Activated CD4-positive, alpha-beta memory T cell treated with anti-CD3 and anti-CD28 coated beads for 36 hours (primary cell): ENCODE measurements at regions of chr15 and their contacts with region 1.

Region 1: GRCh38 chr15:55221090-55222011 is 24.6 kb upstream of the RSL24D1 start:
- DNase-seq: peak; percentile 72
- H3K4me3 Mint-ChIP-seq: peak overlapping the region; percentile 47
- H3K27ac Mint-ChIP-seq: peak overlapping the region; percentile 91
- H3K4me1 Mint-ChIP-seq: peaks cover 76% of the 10 kb centered on the region
- H3K27me3 Mint-ChIP-seq: no peaks in the 10 kb centered on the region

Region 2: DNA sequence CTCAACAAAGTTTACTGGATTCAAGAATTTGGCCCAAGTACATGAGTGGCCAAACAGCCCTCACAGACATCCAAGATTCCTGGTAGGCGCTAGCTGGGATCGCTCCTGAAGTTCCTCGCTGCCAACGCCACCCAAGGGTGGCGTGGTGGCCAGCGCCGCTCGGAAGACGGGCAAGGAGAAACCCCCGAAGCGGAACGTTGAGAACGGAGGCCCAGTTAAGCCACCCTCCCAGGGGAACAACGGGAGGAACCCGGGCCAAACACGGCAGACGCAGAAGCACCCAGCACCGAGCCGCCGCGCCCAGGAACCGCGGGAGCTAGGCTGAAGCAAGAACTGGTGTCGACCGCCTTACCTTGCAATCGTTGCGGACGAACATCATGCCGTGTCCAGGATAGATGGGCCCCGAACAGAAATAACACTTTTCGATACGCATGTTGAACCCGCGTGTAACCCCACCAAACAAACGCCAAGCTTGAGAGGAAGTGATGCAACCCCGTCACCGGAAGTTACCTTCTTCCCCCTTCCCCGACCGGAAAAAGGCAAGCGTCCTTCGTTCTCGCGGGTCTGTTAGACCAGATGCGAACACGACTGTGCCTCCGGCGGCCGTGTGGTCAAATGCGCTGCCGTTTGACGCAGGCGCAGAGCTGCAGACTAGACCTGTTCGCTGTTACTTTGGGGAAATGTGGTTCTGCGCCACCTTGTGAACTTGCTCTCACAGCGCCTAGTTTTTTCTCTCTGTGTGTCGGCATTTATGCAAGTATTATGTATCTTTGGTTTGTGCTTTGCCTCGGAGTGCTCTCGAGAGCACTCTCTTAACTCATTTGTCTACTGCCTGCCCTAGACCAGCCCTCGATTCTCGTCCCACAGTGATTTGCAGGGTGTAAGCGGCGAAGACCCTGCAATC is 24.6 kb before region 1 on chr15 and contains the start of gene RSL24D1:
- CTCF ChIA-PET with region 1: interaction called, 14 read pairs
- POLR2A ChIA-PET with region 1: interaction called, 9 read pairs
- intact Hi-C with region 1: loop called (anchors 2 kb)
- DNase-seq: peak; percentile 98
- H3K4me3 Mint-ChIP-seq: no peak within 1 kb of the TSS
- H3K27ac Mint-ChIP-seq: no peak within 1 kb of the TSS
- H3K4me1 Mint-ChIP-seq: peaks cover 22% of the 10 kb centered on the region
- H3K27me3 Mint-ChIP-seq: no peaks in the 10 kb centered on the region
- total RNA-seq, gene RSL24D1: 157 to 163 TPM

Region 3: DNA sequence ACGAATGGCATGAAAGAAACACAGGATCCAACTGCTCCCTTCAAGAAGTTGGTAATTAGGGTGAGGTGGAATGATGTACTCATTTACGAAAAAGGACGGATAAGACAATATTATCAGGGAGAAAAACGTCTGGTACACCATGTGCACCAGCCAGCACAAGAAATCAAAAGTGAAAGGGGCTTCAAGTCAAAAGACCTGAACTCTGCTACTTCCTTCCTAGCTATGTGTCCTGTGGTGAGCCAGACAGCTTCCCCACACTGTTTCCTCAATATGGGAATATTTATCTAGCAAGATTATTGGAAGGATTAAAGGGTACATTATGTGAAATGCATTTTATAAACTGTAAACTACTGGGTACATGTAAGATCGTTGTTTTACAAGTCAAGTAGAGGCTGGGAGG is 34.4 kb after region 1 on chr15:
- CTCF ChIA-PET with region 1: interaction called, 3 read pairs
- POLR2A ChIA-PET with region 1: interaction called, 3 read pairs
- intact Hi-C with region 1: loop called (anchors 1 kb)
- DNase-seq: no peak
- H3K4me3 Mint-ChIP-seq: peak overlapping the region; percentile 62
- H3K27ac Mint-ChIP-seq: peak overlapping the region; percentile 85
- H3K4me1 Mint-ChIP-seq: peaks cover 77% of the 10 kb centered on the region
- H3K27me3 Mint-ChIP-seq: no peaks in the 10 kb centered on the region

Region 4: GRCh38 chr15:55279746-55280351 is 58.5 kb after region 1 on chr15:
- CTCF ChIA-PET with region 1: interaction called, 13 read pairs
- POLR2A ChIA-PET with region 1: interaction called, 11 read pairs
- intact Hi-C with region 1: loop called (anchors 1 kb)
- DNase-seq: peak; percentile 78
- H3K4me3 Mint-ChIP-seq: peak overlapping the region; percentile 34
- H3K27ac Mint-ChIP-seq: peak overlapping the region; percentile 98
- H3K4me1 Mint-ChIP-seq: peaks cover 93% of the 10 kb centered on the region
- H3K27me3 Mint-ChIP-seq: no peaks in the 10 kb centered on the region